Dendritic cell treated with granulocyte-macrophage colony-stimulating factor and Interleukin-4, amounts not matched to agents 40 ng/mL and 50 ng/mL, for 4 days (primary cell): ENCODE measurements at regions of chr20 and their contacts with region 1.

Region 1: GRCh38 chr20:18466894-18467730 is at the starts of genes DZANK1 and POLR3F:
- H3K4me3 Mint-ChIP-seq: peak within 1 kb of the TSS; percentile 86
- H3K27ac Mint-ChIP-seq: peak within 1 kb of the TSS; percentile 90
- H3K4me1 Mint-ChIP-seq: peaks cover 17% of the 10 kb centered on the region
- H3K27me3 Mint-ChIP-seq: no peaks in the 10 kb centered on the region

Region 2: GRCh38 chr20:18005231-18006109 is 461.6 kb before region 1 on chr20:
- intact Hi-C with region 1: no loop called
- H3K4me3 Mint-ChIP-seq: no peak overlapping the region
- H3K27ac Mint-ChIP-seq: no peak overlapping the region
- H3K4me1 Mint-ChIP-seq: peaks cover 7% of the 10 kb centered on the region
- H3K27me3 Mint-ChIP-seq: peaks cover 3% of the 10 kb centered on the region

Region 3: DNA sequence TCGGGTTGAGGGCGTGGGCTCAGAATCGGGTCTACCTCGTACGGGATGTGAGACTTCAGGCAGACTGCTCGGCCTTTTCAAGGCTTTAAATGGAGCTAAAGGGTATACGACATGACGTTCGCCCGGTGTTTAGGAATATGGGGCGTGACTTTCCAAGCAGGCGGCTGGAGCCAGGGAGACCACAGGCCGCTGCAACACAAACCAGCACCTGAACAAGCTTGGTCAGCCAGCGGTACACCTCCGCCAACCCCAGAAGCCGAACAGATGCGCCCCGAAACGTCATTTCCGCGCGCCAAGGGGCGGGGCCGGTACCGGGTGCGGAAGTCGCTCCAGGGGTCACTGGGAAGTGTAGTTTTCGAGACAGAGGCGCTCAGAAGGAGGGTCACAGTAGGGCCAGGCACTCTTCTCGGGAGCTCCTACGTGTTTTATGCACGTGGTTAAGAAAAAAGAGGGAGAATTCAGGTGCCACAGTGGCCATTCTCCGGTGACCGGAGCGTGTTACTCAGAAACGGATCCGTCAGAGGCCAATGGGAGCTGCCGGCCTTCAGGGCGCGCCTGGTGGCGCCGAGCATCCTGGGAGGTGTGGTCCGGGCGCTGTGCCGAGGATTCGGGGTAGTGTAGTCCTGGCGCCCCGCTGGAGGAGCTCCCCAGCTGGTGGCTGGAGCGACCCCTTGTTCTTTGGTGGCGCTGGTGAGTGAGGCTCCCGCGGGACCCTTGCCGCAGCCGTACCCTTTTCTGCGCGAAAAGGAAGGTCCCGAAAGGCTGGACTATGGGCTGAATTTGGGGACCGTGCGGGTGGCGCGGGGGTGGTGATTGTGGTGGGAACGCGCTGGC is 179.0 kb before region 1 on chr20 and contains the start of gene ZNF133:
- intact Hi-C with region 1: loop called (anchors 5 kb)
- H3K4me3 Mint-ChIP-seq: peak within 1 kb of the TSS; percentile 94
- H3K27ac Mint-ChIP-seq: peak within 1 kb of the TSS; percentile 98
- H3K4me1 Mint-ChIP-seq: peaks cover 17% of the 10 kb centered on the region
- H3K27me3 Mint-ChIP-seq: peaks cover 22% of the 10 kb centered on the region

Region 4: GRCh38 chr20:18412221-18412901 is 54.8 kb before region 1 on chr20:
- intact Hi-C with region 1: loop called (anchors 2 kb)
- H3K4me3 Mint-ChIP-seq: peak overlapping the region; percentile 44
- H3K27ac Mint-ChIP-seq: peak overlapping the region; percentile 78
- H3K4me1 Mint-ChIP-seq: peaks cover 10% of the 10 kb centered on the region
- H3K27me3 Mint-ChIP-seq: no peaks in the 10 kb centered on the region

Region 5: DNA sequence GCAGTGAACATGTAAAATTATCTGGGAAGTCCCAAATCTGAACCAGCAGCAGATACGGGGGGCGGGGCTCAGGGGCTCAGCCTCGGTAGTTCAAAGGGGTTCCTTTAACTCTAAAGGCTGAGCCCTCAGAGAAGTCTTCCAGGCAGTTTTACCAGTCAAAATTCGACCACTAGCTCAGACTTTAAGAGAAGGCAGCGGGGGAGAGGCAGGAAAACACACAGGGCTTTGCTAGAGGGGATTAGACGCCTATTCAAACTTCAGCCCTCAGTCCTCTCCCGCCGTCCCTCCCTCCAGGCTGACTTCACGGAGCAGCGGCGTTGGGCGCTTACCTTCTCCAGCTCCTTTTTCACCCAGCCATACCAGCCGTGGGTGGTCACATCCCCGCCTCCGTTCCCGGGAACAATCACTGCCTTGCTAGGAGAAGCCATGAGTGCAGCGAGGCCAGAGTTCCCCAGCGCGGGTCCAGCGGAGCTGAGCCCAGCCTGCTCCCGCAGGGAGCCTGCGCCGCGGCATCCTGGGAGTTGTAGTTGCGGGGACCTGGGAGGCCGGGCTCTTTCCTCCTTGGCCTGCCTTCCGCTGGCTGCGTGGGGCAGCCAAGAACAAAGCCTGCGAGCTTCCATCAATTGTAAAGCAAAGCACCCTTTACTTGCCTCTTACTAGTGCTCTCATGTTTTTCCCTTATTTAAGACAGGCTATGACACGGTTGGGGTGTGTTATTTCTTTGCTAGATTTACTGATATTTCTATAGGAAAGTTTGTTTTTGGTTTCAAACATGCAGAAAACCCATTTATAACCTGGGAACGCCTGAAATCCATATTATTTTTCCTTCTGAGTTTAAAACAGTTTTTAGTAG is 29.9 kb after region 1 on chr20 and contains the start of gene RBBP9:
- intact Hi-C with region 1: loop called (anchors 2 kb)
- H3K4me3 Mint-ChIP-seq: peak within 1 kb of the TSS; percentile 98
- H3K27ac Mint-ChIP-seq: peak within 1 kb of the TSS; percentile 86
- H3K4me1 Mint-ChIP-seq: peaks cover 13% of the 10 kb centered on the region
- H3K27me3 Mint-ChIP-seq: no peaks in the 10 kb centered on the region

Region 6: DNA sequence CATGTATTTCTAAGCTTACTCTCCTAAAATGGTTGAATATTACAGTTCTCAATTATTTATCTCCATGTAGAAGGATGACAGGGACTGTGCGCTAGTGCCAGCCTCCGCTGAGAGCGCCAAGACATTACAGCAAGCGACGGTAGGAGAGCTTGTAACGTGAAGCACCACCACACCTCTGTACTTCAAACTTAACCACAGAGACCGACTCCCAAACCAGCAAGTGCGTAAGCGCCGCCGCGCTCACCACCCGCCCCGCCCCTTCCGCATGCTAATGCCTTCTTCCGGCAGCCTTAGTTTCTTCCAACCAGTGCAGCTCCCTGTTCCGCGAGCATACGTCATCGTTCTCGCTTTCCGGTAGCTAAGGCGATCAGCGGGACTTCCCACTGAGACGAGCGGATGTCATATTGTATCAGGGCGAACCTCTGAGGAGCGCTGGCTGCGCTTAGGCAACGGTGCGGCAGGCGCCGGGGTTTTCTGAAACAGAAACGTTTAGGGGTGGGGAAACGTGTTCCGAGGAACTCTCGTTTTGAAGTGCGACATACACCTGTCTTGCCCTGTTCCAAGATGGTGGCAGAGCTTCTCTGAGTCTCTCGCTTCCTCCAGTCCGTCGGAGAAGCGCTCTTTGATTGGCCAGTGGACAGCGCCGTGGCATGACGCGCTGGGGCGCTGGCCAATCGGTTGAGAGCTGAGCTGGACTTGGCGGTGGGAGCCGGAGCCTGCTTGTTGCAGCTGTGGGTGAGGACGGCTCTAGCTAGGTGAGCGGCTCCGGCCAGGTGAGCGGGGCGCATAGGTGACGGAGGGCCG is 40.3 kb after region 1 on chr20 and contains the start of gene SEC23B:
- intact Hi-C with region 1: loop called (anchors 1 kb)
- H3K4me3 Mint-ChIP-seq: peak within 1 kb of the TSS; percentile 100
- H3K27ac Mint-ChIP-seq: peak within 1 kb of the TSS; percentile 97
- H3K4me1 Mint-ChIP-seq: peaks cover 44% of the 10 kb centered on the region
- H3K27me3 Mint-ChIP-seq: peaks cover 3% of the 10 kb centered on the region

Region 7: DNA sequence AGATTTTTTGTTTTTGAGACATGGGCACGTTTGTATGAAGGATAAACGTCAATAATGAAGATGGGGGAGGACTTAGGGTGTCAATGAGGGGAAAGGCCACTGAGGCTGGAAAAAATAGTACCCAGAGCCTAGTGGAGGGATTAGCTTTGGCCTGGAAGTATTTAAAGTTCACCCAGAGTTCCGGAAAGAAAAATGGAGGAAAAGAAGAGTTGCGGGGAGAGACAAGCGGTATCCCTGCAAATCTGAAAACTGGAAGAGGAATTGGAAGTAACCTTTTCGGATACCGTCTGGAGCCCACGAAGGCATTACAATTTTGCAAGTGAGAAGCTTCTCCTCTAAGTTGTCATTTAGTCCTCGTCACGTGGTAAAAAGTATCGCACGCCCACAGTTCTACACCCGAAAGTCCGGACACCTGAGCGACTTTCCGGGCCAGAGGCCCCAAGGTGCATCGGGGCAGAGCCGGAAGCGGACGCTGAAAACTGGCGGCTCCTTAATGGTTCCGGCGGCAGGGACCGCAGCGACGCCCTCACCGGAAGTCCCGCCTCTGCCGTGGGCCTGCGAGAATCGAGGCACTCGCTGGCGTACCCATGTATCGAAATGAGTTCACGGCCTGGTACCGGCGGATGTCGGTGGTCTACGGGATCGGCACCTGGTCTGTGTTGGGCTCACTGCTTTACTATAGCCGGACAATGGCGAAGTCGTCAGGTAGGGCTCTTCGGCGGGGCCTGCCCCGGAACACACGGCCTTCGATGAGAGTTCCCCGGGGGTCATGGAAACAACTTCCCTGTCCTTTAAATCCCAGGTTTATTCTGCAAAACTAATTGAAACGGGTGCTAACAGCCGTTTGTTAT is 100.0 kb after region 1 on chr20 and contains the start of gene SMIM26:
- intact Hi-C with region 1: loop called (anchors 5 kb)
- H3K4me3 Mint-ChIP-seq: peak within 1 kb of the TSS; percentile 90
- H3K27ac Mint-ChIP-seq: peak within 1 kb of the TSS; percentile 95
- H3K4me1 Mint-ChIP-seq: peaks cover 21% of the 10 kb centered on the region
- H3K27me3 Mint-ChIP-seq: no peaks in the 10 kb centered on the region

Region 8: GRCh38 chr20:18587665-18588573 is 120.8 kb after region 1 on chr20 and contains the start of gene DTD1:
- intact Hi-C with region 1: loop called (anchors 1 kb)
- H3K4me3 Mint-ChIP-seq: peak within 1 kb of the TSS; percentile 83
- H3K27ac Mint-ChIP-seq: peak within 1 kb of the TSS; percentile 76
- H3K4me1 Mint-ChIP-seq: peaks cover 12% of the 10 kb centered on the region
- H3K27me3 Mint-ChIP-seq: peaks cover 5% of the 10 kb centered on the region